Panc1 (cell line): ENCODE measurements at regions of chr12 and their contacts with region 1.

Region 1: DNA sequence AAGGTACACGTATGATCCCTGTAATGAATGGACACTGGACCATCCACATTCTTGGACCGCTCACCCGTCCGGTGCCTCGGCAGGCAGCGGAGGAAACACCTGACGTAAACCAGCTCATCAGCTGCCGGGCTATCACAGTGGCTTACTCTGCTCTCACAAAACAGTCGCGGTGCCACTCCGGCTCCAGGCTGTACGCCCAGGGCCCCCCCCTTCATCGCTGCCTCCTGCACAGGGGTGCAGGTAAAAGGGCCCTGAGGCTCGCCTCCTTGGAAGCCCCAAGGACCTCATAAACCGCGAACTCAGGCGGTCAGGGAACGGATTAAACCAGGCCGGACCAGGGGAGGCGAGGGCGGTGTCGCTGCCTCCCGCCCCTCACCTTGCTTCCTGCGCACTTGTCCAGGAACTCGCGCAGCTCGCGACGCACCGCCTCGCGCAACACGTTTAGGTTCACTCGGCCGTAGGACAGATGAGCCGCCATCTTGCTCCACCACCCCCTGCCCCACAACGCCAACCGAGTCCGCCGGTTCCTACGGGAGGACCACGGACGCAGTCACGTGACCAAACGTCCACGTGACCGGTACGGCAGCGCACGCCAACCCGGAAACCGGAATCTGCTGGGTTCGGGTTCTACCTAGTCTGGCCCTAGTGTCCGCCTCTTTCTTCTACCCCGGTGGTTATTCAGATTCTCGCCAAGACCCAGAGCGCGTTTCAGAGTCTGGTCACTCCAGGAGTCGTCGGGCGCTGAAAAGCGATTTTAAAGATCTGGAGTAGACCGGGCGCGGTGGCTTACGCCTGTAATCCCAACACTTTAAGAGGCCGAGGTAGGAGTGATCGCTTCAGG is at the start of gene VPS33A:
- DNase-seq: peak; percentile 88
- ATAC-seq: peak; percentile 96
- H3K4me3 ChIP-seq: peak within 1 kb of the TSS; percentile 92 to 98
- H3K27ac ChIP-seq: peak within 1 kb of the TSS; percentile 96
- H3K4me1 ChIP-seq: peaks cover 5% of the 10 kb centered on the region; the same call in 1 of the 2 replicates
- H3K27me3 ChIP-seq: no peaks in the 10 kb centered on the region
- CTCF ChIP-seq: no peak
- total RNA-seq, gene VPS33A: 35.2 TPM

Region 2: GRCh38 chr12:122333142-122334087 is 67.3 kb after region 1 on chr12:
- CTCF ChIA-PET with region 1: no interaction called
- POLR2A ChIA-PET with region 1: interaction called, 14 read pairs
- in situ Hi-C with region 1: no loop called
- intact Hi-C with region 1: no loop called
- DNase-seq: no peak
- ATAC-seq: no peak
- H3K4me3 ChIP-seq: no peak overlapping the region
- H3K27ac ChIP-seq: no peak overlapping the region
- H3K4me1 ChIP-seq: no peaks in the 10 kb centered on the region
- H3K27me3 ChIP-seq: no peaks in the 10 kb centered on the region
- CTCF ChIP-seq: no peak

Region 3: GRCh38 chr12:122421821-122422729 is 155.9 kb after region 1 on chr12 and contains the start of gene CLIP1:
- CTCF ChIA-PET with region 1: no interaction called
- POLR2A ChIA-PET with region 1: interaction called, 13 read pairs
- in situ Hi-C with region 1: no loop called
- intact Hi-C with region 1: no loop called
- DNase-seq: no peak
- ATAC-seq: peak; percentile 84
- H3K4me3 ChIP-seq: peak within 1 kb of the TSS; percentile 78 to 87
- H3K27ac ChIP-seq: peak within 1 kb of the TSS; percentile 99
- H3K4me1 ChIP-seq: peaks cover 37% of the 10 kb centered on the region
- H3K27me3 ChIP-seq: no peaks in the 10 kb centered on the region
- CTCF ChIP-seq: no peak; the same call in 1 of the 2 replicates
- total RNA-seq, gene CLIP1: 117 TPM